ENCODE measurements at regions of chrX and their contacts with region 1.

Region 1: DNA sequence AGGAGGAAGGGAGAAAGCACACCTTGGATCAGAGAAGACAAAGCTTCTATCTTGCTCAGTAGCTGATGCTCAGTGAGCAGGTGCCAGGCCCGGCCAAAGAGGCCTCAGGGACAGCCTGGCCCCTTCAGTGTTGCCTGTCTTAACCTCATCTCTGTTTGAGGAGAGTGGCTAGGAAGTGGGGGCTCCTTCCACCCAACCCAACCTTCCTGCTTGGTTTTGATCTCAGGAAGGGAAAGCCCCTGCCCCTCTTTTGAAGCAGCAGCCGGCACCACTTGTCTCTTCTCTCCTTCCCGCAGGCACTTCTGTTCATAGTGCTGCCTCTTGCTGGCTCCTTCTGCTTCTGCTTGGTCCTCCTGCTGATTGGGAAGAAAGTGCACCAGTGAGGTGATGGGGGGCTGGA is 2.4 kb upstream of the AFF2 start:
- DNase-seq: no peak
- H3K4me3 ChIP-seq: no peak overlapping the region
- H3K27ac ChIP-seq: no peak overlapping the region
- H3K4me1 ChIP-seq: no peaks in the 10 kb centered on the region
- H3K27me3 ChIP-seq: peaks cover 2% of the 10 kb centered on the region; the same call in 1 of the 2 replicates
- CTCF ChIP-seq: no peak

Region 2: DNA sequence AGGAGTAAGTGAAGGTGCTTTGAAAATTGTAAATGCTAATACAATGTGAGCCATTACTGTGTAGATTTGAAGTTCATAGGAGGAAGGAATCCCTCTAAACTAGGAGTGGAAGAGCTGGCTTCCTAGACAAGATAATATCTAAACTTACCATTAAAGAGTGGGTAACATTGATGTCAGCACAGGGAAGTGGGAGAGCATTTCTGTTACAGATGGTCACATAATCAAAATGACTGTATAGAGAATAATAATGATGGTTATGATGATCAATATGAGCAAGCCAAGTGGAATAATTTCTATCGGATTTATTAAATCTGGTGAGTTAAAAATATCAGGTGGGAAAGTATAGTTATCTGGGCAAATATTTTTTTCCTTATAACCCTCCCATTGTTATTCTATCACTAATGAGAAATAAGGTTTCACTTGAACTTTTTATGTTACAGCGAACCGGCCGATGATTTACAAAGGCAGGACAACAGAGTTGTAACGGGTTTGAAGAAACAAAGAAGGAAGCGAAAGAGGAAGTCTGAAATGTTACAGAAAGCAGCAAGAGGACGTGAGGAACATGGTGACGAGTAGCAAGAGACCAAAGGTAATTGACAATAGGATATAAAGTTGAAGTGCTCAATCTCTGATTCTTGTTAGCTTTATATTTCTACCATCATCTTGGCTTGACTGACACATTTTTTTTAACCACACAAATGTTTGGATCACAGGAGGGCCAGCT is 473.5 kb before region 1 on chrX:
- CTCF ChIA-PET with region 1: no interaction called
- POLR2A ChIA-PET with region 1: no interaction called
- intact Hi-C with region 1: no loop called
- DNase-seq: no peak
- H3K4me3 ChIP-seq: no peak overlapping the region
- H3K27ac ChIP-seq: no peak overlapping the region
- H3K4me1 ChIP-seq: 0 out of 2 replicates have a peak, but pooled peaks cover 9% of the 10 kb centered on the region
- H3K27me3 ChIP-seq: no peaks in the 10 kb centered on the region
- CTCF ChIP-seq: no peak

Region 3: GRCh38 chrX:148574237-148574973 is 76.3 kb after region 1 on chrX:
- CTCF ChIA-PET with region 1: no interaction called
- POLR2A ChIA-PET with region 1: interaction called, 10 read pairs
- intact Hi-C with region 1: no loop called
- DNase-seq: no peak
- H3K4me3 ChIP-seq: no peak overlapping the region
- H3K27ac ChIP-seq: no peak overlapping the region
- H3K4me1 ChIP-seq: no peaks in the 10 kb centered on the region
- H3K27me3 ChIP-seq: no peaks in the 10 kb centered on the region
- CTCF ChIP-seq: no peak

Region 4: DNA sequence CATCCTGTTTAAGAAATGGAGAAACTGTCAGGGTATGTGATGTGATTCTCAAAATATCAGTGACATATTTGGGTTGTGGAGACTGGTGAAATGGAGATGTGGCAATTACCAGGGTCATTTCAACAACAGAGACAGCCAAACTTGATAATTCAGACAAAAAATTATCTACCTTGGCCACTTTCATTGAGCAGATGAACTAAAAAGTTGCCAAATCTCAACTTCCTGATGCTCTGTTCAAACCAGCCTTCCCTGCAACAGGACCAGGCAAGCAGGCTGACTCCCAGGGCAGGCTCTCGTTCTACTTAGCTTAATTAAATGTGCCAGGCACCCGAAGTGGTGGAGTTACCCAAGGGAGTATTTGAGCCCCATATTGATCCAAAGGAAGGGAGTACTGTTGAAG is 202.0 kb after region 1 on chrX:
- CTCF ChIA-PET with region 1: no interaction called
- POLR2A ChIA-PET with region 1: no interaction called
- intact Hi-C with region 1: no loop called
- DNase-seq: no peak
- H3K4me3 ChIP-seq: no peak overlapping the region
- H3K27ac ChIP-seq: no peak overlapping the region
- H3K4me1 ChIP-seq: no peaks in the 10 kb centered on the region
- H3K27me3 ChIP-seq: no peaks in the 10 kb centered on the region
- CTCF ChIP-seq: no peak

Region 5: GRCh38 chrX:148940411-148940996 is 442.4 kb after region 1 on chrX:
- CTCF ChIA-PET with region 1: no interaction called
- POLR2A ChIA-PET with region 1: no interaction called
- intact Hi-C with region 1: no loop called
- DNase-seq: no peak
- H3K4me3 ChIP-seq: no peak overlapping the region
- H3K27ac ChIP-seq: no peak overlapping the region
- H3K4me1 ChIP-seq: no peaks in the 10 kb centered on the region
- H3K27me3 ChIP-seq: peaks cover 11% of the 10 kb centered on the region; the same call in 1 of the 2 replicates
- CTCF ChIP-seq: no peak

Measured in PC-9 (cell line).